Sigmoid colon (tissue), 7 donors: ENCODE measurements at regions of chr12 and their contacts with region 1.

Region 1: GRCh38 chr12:1795785-1796514 is 24.4 kb upstream of the LRTM2 start:
- DNase-seq: peak; percentile 96
- H3K4me3 ChIP-seq: peak overlapping the region; percentile 34 to 64 (median 58)
- H3K27ac ChIP-seq: peak overlapping the region; percentile 78 to 86 (median 84)
- H3K4me1 ChIP-seq: peaks cover 0 to 40% (median 31%) of the 10 kb centered on the region in 4 donors
- H3K27me3 ChIP-seq: no peaks in the 10 kb centered on the region
- CTCF ChIP-seq: peak; percentile 74 to 95 (median 83)
- EP300 ChIP-seq: peak in 1 of 4 donors; percentile 42
- POLR2A ChIP-seq: peak in 1 of 2 donors; percentile 67

Region 2: DNA sequence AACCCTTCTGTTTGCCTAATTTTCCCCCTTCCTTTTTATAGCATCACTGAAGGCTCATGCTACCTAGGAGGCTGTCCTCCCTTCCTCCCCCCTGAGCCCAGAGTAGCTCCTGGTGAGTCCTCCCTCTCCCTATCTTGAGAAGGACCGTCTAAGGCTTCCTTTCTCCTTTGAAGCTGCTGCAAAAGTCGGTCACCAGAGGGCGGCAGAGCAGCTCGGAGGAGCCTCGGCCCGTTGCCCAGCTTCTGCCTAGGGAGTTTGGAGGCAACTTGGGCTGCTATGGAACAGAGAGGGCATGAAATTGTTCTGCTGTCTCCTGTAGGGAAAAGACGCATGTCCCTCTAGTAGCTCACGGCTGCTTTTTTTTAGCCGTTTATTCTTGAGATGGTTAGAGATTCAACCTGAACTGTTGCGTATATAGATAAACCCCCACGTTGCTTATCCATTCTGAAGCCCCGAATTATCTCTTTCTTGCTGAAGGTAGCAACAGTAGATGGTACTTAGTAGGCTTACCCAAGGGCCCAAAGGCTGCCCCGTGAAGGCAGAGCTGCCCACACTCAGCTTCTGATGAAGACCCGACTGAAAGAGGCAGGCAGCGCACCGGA is 161.3 kb before region 1 on chr12:
- intact Hi-C with region 1: loop called (anchors 5 kb)
- DNase-seq: peak; percentile 92
- H3K4me3 ChIP-seq: no peak overlapping the region
- H3K27ac ChIP-seq: peak overlapping the region in 2 of 4 donors; percentile 84 to 87
- H3K4me1 ChIP-seq: peaks cover 0 to 64% (median 44%) of the 10 kb centered on the region in 4 donors
- H3K27me3 ChIP-seq: no peaks in the 10 kb centered on the region
- CTCF ChIP-seq: peak; percentile 63 to 84 (median 75)
- EP300 ChIP-seq: no peak
- POLR2A ChIP-seq: no peak

Region 3: GRCh38 chr12:1650260-1650977 is 145.5 kb before region 1 on chr12:
- intact Hi-C with region 1: loop called (anchors 1 kb)
- DNase-seq: no peak
- H3K4me3 ChIP-seq: no peak overlapping the region
- H3K27ac ChIP-seq: peak overlapping the region; percentile 67 to 78 (median 76)
- H3K4me1 ChIP-seq: peaks cover 0 to 62% (median 53%) of the 10 kb centered on the region in 4 donors
- H3K27me3 ChIP-seq: no peaks in the 10 kb centered on the region
- CTCF ChIP-seq: no peak
- EP300 ChIP-seq: no peak
- POLR2A ChIP-seq: no peak

Region 4: GRCh38 chr12:1939801-1940607 is 144.1 kb after region 1 on chr12:
- intact Hi-C with region 1: loop called (anchors 1 kb)
- DNase-seq: peak; percentile 92
- H3K4me3 ChIP-seq: peak overlapping the region in 2 of 4 donors; percentile 1 to 11
- H3K27ac ChIP-seq: peak overlapping the region; percentile 73 to 84 (median 79)
- H3K4me1 ChIP-seq: peaks cover 0 to 63% (median 52%) of the 10 kb centered on the region in 4 donors
- H3K27me3 ChIP-seq: no peaks in the 10 kb centered on the region
- CTCF ChIP-seq: peak; percentile 92 to 99 (median 94)
- EP300 ChIP-seq: no peak
- POLR2A ChIP-seq: no peak

Region 5: DNA sequence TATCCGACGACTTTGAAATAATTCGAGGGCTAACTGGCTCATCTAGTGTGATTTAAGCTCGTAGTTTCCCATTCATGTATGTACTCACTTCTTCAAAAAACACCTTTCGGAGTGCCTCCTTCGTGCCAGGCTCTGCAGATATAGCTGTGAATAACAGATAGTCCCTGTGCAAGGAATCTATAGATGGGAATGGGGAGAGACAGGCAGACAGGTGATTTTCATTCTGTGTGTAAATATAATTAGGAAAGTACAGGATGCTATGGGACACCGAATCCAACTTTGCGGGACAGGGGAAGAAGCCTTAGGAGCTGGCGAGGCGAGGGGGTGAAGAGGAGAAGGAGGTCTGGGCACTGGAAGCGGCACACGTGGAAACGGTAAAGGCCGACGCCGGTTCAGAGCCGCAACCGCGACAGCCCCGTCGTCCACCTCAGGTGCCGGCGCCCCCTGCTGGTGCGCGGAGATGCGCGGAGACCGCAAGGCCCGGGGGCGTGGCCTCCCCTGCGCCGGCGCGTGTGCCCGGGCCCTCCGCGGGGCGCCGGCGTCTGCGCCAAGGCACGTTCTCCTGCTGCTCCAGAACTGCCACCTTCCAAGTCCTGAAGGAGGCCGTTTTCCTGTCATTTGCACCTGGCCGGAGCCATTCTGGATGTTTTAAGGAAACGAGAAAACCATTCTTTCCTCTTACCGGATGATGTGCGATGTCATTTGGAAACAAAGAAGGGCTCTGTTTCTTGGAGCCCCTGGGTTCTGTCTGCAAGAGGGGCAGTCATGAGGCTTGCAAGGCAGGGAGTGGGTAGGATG is 238.9 kb after region 1 on chr12:
- intact Hi-C with region 1: loop called (anchors 1 kb)
- DNase-seq: peak; percentile 94
- H3K4me3 ChIP-seq: peak overlapping the region; percentile 3 to 41 (median 33)
- H3K27ac ChIP-seq: peak overlapping the region in 3 of 4 donors; percentile 77 to 87 (median 77)
- H3K4me1 ChIP-seq: peaks cover 0 to 74% (median 62%) of the 10 kb centered on the region in 4 donors
- H3K27me3 ChIP-seq: no peaks in the 10 kb centered on the region
- CTCF ChIP-seq: peak; percentile 64 to 94 (median 72)
- EP300 ChIP-seq: no peak
- POLR2A ChIP-seq: no peak

Region 6: DNA sequence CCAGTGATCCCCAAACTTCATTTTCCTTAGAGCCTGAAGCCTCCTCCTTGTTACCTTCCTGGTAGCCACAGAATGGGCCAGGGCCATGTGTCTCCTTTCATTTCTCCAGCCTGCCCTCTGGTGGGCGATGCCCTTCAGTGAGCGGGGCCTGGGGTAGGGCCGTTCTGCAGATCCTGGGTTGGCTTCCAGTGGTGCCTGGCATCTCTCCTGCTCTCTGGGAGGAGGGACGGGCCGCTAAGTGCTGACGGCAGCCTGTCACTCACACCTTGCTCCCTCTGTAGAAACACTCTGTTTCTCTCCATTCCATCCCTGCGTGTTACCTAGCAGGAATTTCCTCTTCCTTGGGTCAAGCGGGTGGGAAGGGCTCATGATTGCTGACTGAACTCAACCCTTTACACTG is 488.9 kb after region 1 on chr12:
- intact Hi-C with region 1: loop called (anchors 5 kb)
- DNase-seq: peak; percentile 84
- H3K4me3 ChIP-seq: no peak overlapping the region
- H3K27ac ChIP-seq: peak overlapping the region; percentile 77 to 89 (median 84)
- H3K4me1 ChIP-seq: peaks cover 0 to 84% (median 81%) of the 10 kb centered on the region in 4 donors
- H3K27me3 ChIP-seq: no peaks in the 10 kb centered on the region
- CTCF ChIP-seq: peak; percentile 38 to 68 (median 58)
- EP300 ChIP-seq: no peak
- POLR2A ChIP-seq: no peak

Region 7: GRCh38 chr12:2583091-2583497 is 787.1 kb after region 1 on chr12:
- intact Hi-C with region 1: loop called (anchors 2 kb)
- DNase-seq: peak; percentile 82
- H3K4me3 ChIP-seq: peak overlapping the region in 1 of 4 donors; percentile 8
- H3K27ac ChIP-seq: peak overlapping the region in 3 of 4 donors; percentile 57 to 72 (median 71)
- H3K4me1 ChIP-seq: peaks cover 0 to 34% (median 23%) of the 10 kb centered on the region in 4 donors
- H3K27me3 ChIP-seq: no peaks in the 10 kb centered on the region
- CTCF ChIP-seq: peak; percentile 71 to 95 (median 86)
- EP300 ChIP-seq: no peak
- POLR2A ChIP-seq: no peak